ENCODE measurements at regions of chr1 and their contacts with region 1.

Region 1: GRCh38 chr1:31564134-31564989 is 12.0 kb upstream of the TINAGL1 start:
- DNase-seq: peak; percentile 51
- H3K4me3 ChIP-seq: no peak overlapping the region
- H3K27ac ChIP-seq: no peak overlapping the region
- H3K4me1 ChIP-seq: no peaks in the 10 kb centered on the region
- CTCF ChIP-seq: peak; percentile 93

Region 2: DNA sequence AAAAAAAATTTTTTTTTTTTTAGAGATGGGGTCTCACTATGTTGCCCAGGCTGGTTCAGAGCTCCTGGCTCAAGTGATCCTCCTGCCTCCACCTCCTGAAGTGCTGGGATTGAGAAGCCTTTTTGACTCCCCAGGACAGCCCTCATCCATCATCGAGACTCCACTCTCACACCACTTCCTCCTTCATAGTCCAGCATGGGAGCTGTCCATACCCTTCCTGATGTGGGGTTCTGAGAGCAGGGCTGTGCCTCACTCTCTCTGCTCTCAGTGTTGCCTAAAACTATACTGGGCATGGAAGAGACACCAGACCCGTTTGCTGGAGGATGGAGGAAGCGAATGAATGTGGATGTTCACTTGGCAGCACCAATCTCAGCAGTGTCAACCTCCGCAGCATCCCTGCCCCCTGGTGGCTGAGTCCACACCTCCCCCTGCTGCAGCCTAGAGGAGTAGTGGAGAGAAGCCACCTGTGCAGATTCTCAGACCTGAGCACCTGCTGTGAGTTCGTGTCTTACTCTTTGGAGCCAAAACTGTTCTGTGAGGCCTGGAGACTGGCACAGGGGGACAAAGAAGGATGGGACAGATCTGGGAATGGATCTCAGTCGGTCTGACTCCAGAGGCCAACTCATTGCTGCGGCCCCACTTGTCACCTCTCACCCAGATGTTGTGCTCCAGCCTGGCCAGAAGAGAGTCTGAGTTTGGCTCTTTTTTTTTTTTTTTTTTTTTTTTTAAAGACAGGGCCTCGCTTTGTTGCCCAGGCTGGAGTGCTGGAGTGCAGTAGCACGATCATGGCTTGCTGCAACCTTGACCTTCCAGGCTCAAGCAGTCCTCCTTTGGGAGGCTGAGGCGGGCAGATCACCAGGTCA is 29.6 kb after region 1 on chr1:
- CTCF ChIA-PET with region 1: no interaction called
- POLR2A ChIA-PET with region 1: no interaction called
- intact Hi-C with region 1: loop called (anchors 1 kb)
- DNase-seq: peak; percentile 71
- H3K4me3 ChIP-seq: no peak overlapping the region
- H3K27ac ChIP-seq: no peak overlapping the region
- H3K4me1 ChIP-seq: no peaks in the 10 kb centered on the region
- CTCF ChIP-seq: peak; percentile 94

Measured in OCI-LY7 (cell line).